Left ventricle myocardium superior (tissue), 1 donor: ENCODE measurements at regions of chr1 and their contacts with region 1.

Region 1: DNA sequence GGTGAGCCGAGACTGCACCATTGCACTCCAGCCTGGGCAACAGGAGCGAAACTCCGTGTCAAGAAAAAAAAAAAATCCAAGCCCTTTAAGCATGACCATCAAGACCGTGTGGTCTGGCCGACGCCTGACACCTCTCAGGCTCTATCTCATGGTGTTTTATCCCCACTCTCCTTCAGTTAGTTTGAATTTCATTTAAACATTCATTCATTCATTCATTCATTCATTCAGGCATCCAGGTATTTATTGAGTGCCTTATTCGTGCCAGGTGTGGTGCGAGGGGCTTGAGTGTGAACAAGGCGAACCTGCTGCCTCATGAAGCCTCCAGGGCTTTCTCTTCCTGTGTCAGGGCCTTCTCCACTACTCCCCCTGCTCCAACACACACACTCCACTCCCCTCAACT is 22.6 kb upstream of the OPRD1 start:
- DNase-seq: no peak
- ATAC-seq: no peak

Region 2: DNA sequence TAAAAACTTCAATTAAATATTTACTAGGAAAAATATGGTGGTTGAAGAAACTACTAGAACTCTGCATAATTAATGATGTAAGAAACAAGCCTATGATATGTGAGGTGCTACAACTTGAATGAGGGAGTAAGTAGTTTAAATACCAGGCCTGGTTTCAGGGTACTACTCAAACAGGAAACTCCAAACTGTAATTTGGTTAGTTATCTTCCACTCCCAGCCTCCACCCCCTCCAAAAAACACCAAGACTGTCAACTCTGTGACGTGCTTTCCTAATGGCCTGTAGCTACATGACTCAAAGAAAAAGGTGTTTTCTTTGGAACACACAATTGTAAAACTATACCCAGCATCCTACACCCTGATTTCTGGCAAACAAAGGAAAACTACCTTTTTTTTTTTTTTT is 339.5 kb before region 1 on chr1:
- intact Hi-C with region 1: no loop called
- DNase-seq: no peak
- ATAC-seq: no peak

Region 3: GRCh38 chr1:28871631-28872401 is 82.4 kb after region 1 on chr1:
- intact Hi-C with region 1: loop called (anchors 5 kb)
- DNase-seq: no peak
- ATAC-seq: no peak

Region 4: GRCh38 chr1:28950449-28950848 is 161.0 kb after region 1 on chr1:
- intact Hi-C with region 1: no loop called
- DNase-seq: no peak
- ATAC-seq: no peak

Region 5: DNA sequence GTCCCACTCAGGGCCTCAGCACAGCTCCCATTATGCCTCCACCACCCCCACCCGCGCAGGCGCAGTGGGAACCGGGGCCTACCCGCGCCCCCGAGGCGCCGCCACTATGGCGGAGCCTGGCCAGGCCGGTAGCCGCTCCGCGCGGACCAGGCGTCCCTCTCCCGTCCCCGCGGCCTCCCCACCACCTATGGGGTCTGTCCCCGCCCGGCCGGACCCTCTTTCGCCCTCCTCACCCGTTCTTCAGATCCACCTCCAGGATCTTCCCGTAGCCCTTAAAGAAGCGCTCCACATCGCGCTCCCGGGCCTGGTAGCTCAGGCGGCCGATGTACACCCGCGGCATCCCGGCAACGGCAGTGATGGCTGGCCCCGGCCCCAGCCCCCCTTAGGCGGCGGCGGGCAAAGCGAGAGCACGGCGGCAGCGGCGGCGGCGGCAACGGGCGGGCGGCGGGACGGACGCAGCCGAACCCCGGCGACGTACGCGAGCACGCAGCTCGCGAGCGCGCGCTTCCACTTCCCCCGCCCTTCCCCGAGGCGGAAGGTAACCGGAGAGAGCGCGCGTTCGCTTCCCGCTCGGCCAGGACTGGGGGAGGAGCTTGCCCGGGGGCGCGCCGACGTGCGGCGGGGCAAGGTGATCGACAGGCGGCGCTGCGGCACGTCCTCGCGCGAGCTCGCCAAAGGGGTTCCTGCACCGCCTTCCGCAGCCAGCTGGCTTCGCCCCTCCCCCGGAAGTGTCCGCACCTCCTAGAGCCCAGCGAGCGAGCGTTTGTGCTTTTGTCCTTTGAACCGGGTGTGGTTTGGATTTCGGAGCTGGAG is 392.2 kb after region 1 on chr1 and contains the start of gene SRSF4:
- intact Hi-C with region 1: no loop called
- DNase-seq: peak; percentile 100
- ATAC-seq: peak; percentile 96
- total RNA-seq, gene SRSF4: 53.8 TPM